ENCODE measurements at regions of chr11 and their contacts with region 1.

Region 1: GRCh38 chr11:75525596-75526541 is at the start of gene GDPD5:
- DNase-seq: peak; percentile 91
- ATAC-seq: peak; percentile 95
- H3K4me3 ChIP-seq: peak within 1 kb of the TSS in 4 of 5 experiments; percentile 59 to 74 (median 70)
- H3K4me3 Mint-ChIP-seq: peak within 1 kb of the TSS; percentile 96
- H3K27ac ChIP-seq: no peak within 1 kb of the TSS
- H3K27ac Mint-ChIP-seq: peak within 1 kb of the TSS; percentile 83
- H3K4me1 ChIP-seq: peaks cover 25 to 33% of the 10 kb centered on the region in 2 donors
- H3K4me1 Mint-ChIP-seq: peaks cover 36% of the 10 kb centered on the region
- H3K27me3 ChIP-seq: peaks cover 0 to 31% (median 10%) of the 10 kb centered on the region in 4 experiments
- H3K27me3 Mint-ChIP-seq: peaks cover 4% of the 10 kb centered on the region
- CTCF ChIP-seq: peak; percentile 61
- total RNA-seq, gene GDPD5: 99.6 and 102 TPM in 2 replicates

Region 2: DNA sequence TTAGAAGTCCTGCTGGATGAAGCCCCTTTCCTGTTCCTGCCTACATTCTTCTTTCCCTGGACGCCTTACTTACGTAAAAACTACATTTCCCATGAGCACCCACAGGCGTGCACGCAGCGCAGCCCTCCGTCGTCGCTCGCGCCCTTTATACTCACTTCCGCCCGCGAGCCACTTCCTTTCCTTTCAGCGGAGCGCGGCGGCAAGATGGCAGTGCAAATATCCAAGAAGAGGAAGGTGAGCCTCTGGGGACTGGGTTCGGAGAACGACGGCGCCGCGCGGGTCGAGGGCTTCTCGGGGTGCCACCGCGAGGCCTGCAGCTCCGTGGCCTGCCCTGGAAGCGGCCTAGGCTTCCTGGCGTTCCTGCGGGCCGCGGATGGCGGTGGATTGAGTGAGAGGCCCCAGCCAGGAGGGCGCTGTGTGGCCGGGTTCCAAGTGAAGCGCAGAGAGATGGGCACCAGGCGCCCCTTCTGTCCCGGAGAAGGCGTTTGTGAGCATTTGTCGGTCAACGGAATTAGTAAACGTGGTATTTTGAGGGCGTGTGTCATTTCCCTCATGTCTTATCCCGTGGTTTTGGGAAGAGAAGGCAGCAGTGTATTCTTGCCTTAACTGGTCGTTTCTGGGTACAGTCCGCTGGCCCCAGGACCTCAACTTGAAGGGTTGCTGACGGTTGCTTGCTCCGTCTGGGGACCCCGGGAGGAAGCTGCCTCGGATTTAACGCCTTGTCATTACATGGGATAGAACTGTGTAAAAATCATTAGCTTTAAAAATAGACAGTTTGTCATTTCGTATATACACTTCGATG is 126.3 kb before region 1 on chr11 and contains the start of gene RPS3:
- CTCF ChIA-PET with region 1: interaction called, 4 read pairs
- POLR2A ChIA-PET with region 1: no interaction called
- intact Hi-C with region 1: loop called (anchors 1 kb)
- DNase-seq: peak; percentile 94
- ATAC-seq: peak; percentile 94
- H3K4me3 ChIP-seq: peak within 1 kb of the TSS; percentile 71 to 96 (median 76)
- H3K4me3 Mint-ChIP-seq: peak within 1 kb of the TSS; percentile 88
- H3K27ac ChIP-seq: peak within 1 kb of the TSS; percentile 85 to 87
- H3K27ac Mint-ChIP-seq: peak within 1 kb of the TSS; percentile 95
- H3K4me1 ChIP-seq: peaks cover 20 to 29% of the 10 kb centered on the region in 2 donors
- H3K4me1 Mint-ChIP-seq: peaks cover 41% of the 10 kb centered on the region
- H3K27me3 ChIP-seq: no peaks in the 10 kb centered on the region
- H3K27me3 Mint-ChIP-seq: peaks cover 7% of the 10 kb centered on the region
- CTCF ChIP-seq: peak; percentile 29
- total RNA-seq, gene RPS3: 3,554 and 3,642 TPM in 2 replicates

Region 3: DNA sequence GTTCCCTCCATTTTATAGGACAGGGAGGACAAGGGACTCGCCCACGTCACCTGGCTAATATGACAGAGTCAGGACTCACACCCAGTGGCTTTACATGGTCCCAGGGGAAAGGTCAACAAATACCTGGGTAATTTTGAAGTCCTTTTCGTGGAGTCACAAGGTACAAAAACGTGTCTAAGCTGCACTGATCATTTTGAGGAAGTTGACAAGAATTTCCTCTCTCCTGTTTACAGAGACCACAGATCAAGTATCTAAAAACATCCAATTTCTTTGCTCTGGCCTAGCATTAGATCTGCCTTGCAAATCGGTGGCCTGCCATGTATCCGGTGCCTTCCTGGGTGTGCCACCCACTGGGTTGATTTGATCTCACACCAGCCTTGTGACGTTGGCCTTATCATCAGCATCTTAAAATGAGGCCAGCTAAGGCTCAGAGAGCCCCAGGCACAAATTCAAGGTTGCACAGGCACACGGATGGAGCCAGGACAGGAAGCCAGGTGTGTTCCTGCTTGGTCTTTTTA is 17.8 kb before region 1 on chr11:
- CTCF ChIA-PET with region 1: interaction called, 8 read pairs
- POLR2A ChIA-PET with region 1: interaction called, 3 read pairs
- intact Hi-C with region 1: loop called (anchors 1 kb)
- DNase-seq: peak; percentile 82
- ATAC-seq: peak; percentile 86
- H3K4me3 ChIP-seq: peak overlapping the region in 2 of 5 experiments; percentile 0 to 13
- H3K4me3 Mint-ChIP-seq: peak overlapping the region; percentile 81
- H3K27ac ChIP-seq: peak overlapping the region; percentile 68 to 82
- H3K27ac Mint-ChIP-seq: peak overlapping the region; percentile 97
- H3K4me1 ChIP-seq: peaks cover 25 to 49% of the 10 kb centered on the region in 2 donors
- H3K4me1 Mint-ChIP-seq: peaks cover 58% of the 10 kb centered on the region
- H3K27me3 ChIP-seq: no peaks in the 10 kb centered on the region
- H3K27me3 Mint-ChIP-seq: no peaks in the 10 kb centered on the region
- CTCF ChIP-seq: no peak

Region 4: GRCh38 chr11:75654314-75654713 is 128.4 kb after region 1 on chr11:
- CTCF ChIA-PET with region 1: no interaction called
- POLR2A ChIA-PET with region 1: no interaction called
- intact Hi-C with region 1: no loop called
- DNase-seq: no peak
- ATAC-seq: no peak
- H3K4me3 ChIP-seq: no peak overlapping the region
- H3K4me3 Mint-ChIP-seq: no peak overlapping the region
- H3K27ac ChIP-seq: no peak overlapping the region
- H3K27ac Mint-ChIP-seq: no peak overlapping the region
- H3K4me1 ChIP-seq: no peaks in the 10 kb centered on the region
- H3K4me1 Mint-ChIP-seq: no peaks in the 10 kb centered on the region
- H3K27me3 ChIP-seq: peaks cover 0 to 4% (median 1%) of the 10 kb centered on the region in 4 experiments
- H3K27me3 Mint-ChIP-seq: peaks cover 19% of the 10 kb centered on the region
- CTCF ChIP-seq: no peak

Measured in B cell (primary cell).